Spleen (tissue), 13 donors: ENCODE measurements at regions of chr16 and their contacts with region 1.

Region 1: DNA sequence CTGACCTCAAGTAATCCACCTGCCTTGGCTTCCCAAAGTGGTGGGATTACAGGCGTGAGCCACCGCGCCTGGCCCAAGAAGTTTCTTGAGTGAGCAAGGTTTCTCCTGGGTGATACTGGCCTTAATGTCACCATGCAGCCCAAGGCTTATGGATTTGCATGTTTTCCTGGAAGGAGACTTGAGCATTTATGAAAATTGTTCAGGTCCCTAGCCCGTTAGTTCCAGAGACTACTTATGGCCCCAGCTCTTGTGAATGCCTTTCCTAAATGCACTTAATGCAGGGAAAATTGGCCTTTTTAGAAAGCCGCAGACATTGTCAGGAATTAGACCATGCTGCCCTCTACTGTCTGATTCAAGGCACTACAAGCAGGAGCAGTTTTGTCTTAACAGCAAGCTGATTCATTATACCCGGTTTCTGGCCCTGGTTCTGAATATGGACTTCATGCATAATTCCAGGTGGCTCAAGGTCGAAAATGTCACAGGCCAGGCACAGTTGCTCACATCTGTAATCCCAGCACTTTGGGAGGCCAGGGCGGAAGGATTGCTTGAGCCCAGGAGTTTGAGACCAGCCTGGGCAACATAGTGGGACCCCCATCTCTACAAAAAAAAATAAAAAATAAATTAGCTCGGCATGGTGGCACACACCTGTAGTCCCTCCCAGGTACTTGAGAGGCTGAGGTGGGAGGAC is 91.3 kb downstream of the SNX29 start:
- DNase-seq: peak; percentile 64
- H3K4me3 ChIP-seq: no peak overlapping the region
- H3K27ac ChIP-seq: no peak overlapping the region
- H3K4me1 ChIP-seq: peaks cover 6 to 20% (median 10%) of the 10 kb centered on the region in 6 donors
- H3K27me3 ChIP-seq: no peaks in the 10 kb centered on the region
- CTCF ChIP-seq: peak; percentile 86 to 95 (median 93)
- POLR2A ChIP-seq: no peak

Region 2: GRCh38 chr16:11851294-11852091 is 216.4 kb before region 1 on chr16 and contains the start of gene RSL1D1:
- intact Hi-C with region 1: loop called (anchors 10 kb)
- DNase-seq: peak; percentile 95
- H3K4me3 ChIP-seq: peak within 1 kb of the TSS; percentile 81 to 99 (median 96)
- H3K27ac ChIP-seq: peak within 1 kb of the TSS; percentile 80 to 94 (median 88)
- H3K4me1 ChIP-seq: peaks cover 16 to 75% (median 57%) of the 10 kb centered on the region in 6 donors
- H3K27me3 ChIP-seq: no peaks in the 10 kb centered on the region
- CTCF ChIP-seq: no peak
- POLR2A ChIP-seq: peak; percentile 10 to 71 (median 12)
- total RNA-seq, gene RSL1D1: 85.8 to 135 (median 112) TPM

Region 3: DNA sequence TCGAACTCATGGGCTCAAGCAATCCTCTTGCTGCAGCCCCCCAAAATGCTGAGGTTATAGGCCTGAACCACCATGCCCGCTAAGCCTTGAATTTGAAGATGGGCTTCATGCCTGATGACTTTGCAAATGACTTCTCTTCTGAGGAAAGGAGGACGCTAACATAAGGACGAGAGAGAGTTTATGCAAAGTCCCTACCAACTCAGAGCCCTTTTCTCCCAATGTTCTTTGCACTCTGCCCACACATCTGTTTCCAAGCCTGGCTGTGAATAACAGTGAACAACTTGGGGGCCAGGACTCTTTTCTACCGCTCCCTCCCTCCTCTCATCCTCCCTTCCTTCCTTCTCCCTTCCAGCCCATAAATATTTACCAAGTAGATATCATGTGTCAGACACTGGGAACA is 117.5 kb before region 1 on chr16:
- intact Hi-C with region 1: loop called (anchors 5 kb)
- DNase-seq: no peak
- H3K4me3 ChIP-seq: no peak overlapping the region
- H3K27ac ChIP-seq: no peak overlapping the region
- H3K4me1 ChIP-seq: peaks cover 0 to 12% (median 0%) of the 10 kb centered on the region in 6 donors
- H3K27me3 ChIP-seq: no peaks in the 10 kb centered on the region
- CTCF ChIP-seq: no peak
- POLR2A ChIP-seq: no peak

Region 4: DNA sequence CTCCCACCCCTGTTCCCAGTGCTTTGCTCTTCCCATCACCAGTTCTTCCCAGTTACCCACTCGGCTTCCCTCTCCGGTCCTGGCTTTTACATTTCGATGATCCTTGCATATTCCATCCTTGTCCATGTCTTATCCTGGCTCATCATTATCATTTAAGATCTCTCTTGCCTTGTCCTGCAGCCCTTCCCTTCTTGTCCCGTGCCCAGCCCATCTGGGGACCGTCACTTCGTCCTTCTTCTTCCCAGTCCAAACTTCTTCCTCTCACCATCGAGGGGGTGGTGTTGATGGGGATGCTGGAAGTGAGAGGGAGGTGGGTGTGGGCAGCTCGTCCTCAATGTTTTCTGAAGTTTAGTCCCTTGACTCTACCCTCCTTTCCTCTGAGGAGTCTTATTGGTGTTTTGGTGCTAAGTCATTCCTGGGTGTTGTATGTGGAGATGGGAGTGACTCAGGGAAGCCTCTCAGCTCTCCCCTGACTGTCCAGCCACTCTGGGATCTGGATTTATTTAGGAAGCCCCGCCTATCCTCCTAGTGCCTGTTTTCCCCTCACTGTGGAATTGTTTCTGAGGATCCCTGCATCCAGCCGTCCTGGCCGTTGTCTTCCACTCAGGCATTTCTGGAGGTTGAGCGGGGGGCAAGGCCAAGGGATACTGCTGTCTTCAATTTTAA is 90.3 kb before region 1 on chr16:
- intact Hi-C with region 1: loop called (anchors 10 kb)
- DNase-seq: no peak
- H3K4me3 ChIP-seq: peak overlapping the region; percentile 64 to 96 (median 85)
- H3K27ac ChIP-seq: peak overlapping the region in 7 of 8 donors; percentile 67 to 91 (median 84)
- H3K4me1 ChIP-seq: peaks cover 15 to 68% (median 38%) of the 10 kb centered on the region in 6 donors
- H3K27me3 ChIP-seq: no peaks in the 10 kb centered on the region
- CTCF ChIP-seq: no peak
- POLR2A ChIP-seq: no peak